K562 (cell line): ENCODE measurements at regions of chr19 and their contacts with region 1.

Region 1: GRCh38 chr19:41641879-41642485 is 15.1 kb upstream of the CEACAM4 start:
- DNase-seq: peak; percentile 62 to 77 (median 76)
- ATAC-seq: peak; percentile 85
- H3K4me3 ChIP-seq: no peak overlapping the region
- H3K27ac ChIP-seq: no peak overlapping the region
- H3K4me1 ChIP-seq: no peaks in the 10 kb centered on the region
- H3K27me3 ChIP-seq: no peaks in the 10 kb centered on the region; a peak in 1 of 5 replicates
- CTCF ChIP-seq: peak; percentile 81 to 90 (median 81)
- EP300 ChIP-seq: no peak
- POLR2A ChIP-seq: no peak
- RAD21 ChIP-seq: peak in 1 of 2 experiments; percentile 57; a peak in 2 of 4 replicates

Region 2: GRCh38 chr19:41626877-41627276 is 15.1 kb before region 1 on chr19 and contains the start of gene CEACAM4:
- CTCF ChIA-PET with region 1: no interaction called
- POLR2A ChIA-PET with region 1: no interaction called
- in situ Hi-C with region 1: no loop called
- intact Hi-C with region 1: no loop called
- DNase-seq: no peak
- ATAC-seq: no peak
- H3K4me3 ChIP-seq: no peak within 1 kb of the TSS
- H3K27ac ChIP-seq: no peak within 1 kb of the TSS
- H3K4me1 ChIP-seq: no peaks in the 10 kb centered on the region
- H3K27me3 ChIP-seq: peaks cover 0 to 5% of the 10 kb centered on the region in 2 experiments; a peak in 1 of 5 replicates
- CTCF ChIP-seq: no peak
- EP300 ChIP-seq: no peak
- POLR2A ChIP-seq: no peak
- RAD21 ChIP-seq: no peak
- polyA plus RNA-seq, gene CEACAM4: not detected

Region 3: DNA sequence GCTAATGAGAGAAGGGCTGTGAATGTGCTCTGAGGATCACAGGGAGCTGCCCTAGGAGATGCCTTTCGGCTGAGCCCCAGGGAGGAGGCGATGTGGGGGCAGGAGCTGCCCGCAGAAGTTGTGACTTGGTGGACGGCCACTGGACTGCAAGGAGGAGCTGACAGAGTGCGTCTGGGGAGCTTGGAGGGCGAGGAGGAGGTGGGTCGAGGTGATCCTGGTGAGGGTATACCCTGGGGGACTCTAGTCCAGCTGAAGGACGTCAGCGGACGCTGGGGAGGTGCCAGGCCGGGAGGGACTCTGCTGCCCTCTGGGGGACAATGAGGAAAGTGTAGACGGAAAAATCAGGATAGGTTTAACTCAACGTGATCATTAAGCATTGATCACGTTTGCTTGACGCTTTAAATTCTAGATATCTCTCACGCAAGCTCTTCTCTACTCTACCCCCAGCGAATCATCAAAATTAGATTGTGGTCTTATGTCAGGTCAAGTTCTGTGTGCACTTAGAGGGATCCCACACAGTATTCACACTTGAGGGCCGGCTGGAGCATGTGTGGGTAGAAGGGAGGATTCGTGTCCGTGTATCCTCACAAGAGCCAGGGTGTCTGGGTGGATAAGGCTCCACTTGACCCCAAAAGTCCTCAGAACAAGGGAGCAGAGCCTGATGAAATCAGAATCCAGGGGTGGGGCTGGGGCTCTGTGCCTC is 49.4 kb after region 1 on chr19:
- CTCF ChIA-PET with region 1: no interaction called
- POLR2A ChIA-PET with region 1: no interaction called
- in situ Hi-C with region 1: no loop called
- intact Hi-C with region 1: loop called (anchors 5 kb)
- DNase-seq: peak; percentile 35 to 64 (median 54)
- ATAC-seq: peak; percentile 87
- H3K4me3 ChIP-seq: no peak overlapping the region
- H3K27ac ChIP-seq: no peak overlapping the region
- H3K4me1 ChIP-seq: no peaks in the 10 kb centered on the region; a peak in 1 of 5 replicates
- H3K27me3 ChIP-seq: no peaks in the 10 kb centered on the region; a peak in 1 of 5 replicates
- CTCF ChIP-seq: peak; percentile 62 to 75 (median 71)
- EP300 ChIP-seq: no peak
- POLR2A ChIP-seq: no peak
- RAD21 ChIP-seq: peak in 1 of 2 experiments; percentile 28; a peak in 1 of 4 replicates